ENCODE measurements at regions of chr20 and their contacts with region 1.

Region 1: GRCh38 chr20:58179432-58180099 is 48.9 kb downstream of the ANKRD60 start:
- H3K4me3 ChIP-seq: peak overlapping the region; percentile 31
- H3K27ac ChIP-seq: no peak overlapping the region
- H3K4me1 ChIP-seq: no peaks in the 10 kb centered on the region
- CTCF ChIP-seq: peak; percentile 82; the same call in 1 of the 2 replicates

Region 2: GRCh38 chr20:58209652-58210397 is 30.3 kb after region 1 on chr20:
- CTCF ChIA-PET with region 1: interaction called, 16 read pairs
- POLR2A ChIA-PET with region 1: no interaction called
- H3K4me3 ChIP-seq: no peak overlapping the region
- H3K27ac ChIP-seq: no peak overlapping the region
- H3K4me1 ChIP-seq: no peaks in the 10 kb centered on the region
- CTCF ChIP-seq: peak; percentile 100

Region 3: GRCh38 chr20:58268928-58269619 is 89.5 kb after region 1 on chr20:
- CTCF ChIA-PET with region 1: no interaction called
- POLR2A ChIA-PET with region 1: no interaction called
- H3K4me3 ChIP-seq: no peak overlapping the region
- H3K27ac ChIP-seq: no peak overlapping the region
- H3K4me1 ChIP-seq: peaks cover 3% of the 10 kb centered on the region; the same call in 1 of the 2 replicates
- CTCF ChIP-seq: no peak

Region 4: GRCh38 chr20:58293453-58293852 is 113.9 kb after region 1 on chr20:
- CTCF ChIA-PET with region 1: no interaction called
- POLR2A ChIA-PET with region 1: no interaction called
- H3K4me3 ChIP-seq: no peak overlapping the region
- H3K27ac ChIP-seq: no peak overlapping the region
- H3K4me1 ChIP-seq: no peaks in the 10 kb centered on the region
- CTCF ChIP-seq: no peak